Activated CD4-positive, alpha-beta T cell treated with anti-CD3 and anti-CD28 coated beads, Interleukin-2, amount 10 ng/mL, durations not matched to agents 24 days and 14 days (primary cell): ENCODE measurements at regions of chr1 and their contacts with region 1.

Region 1: DNA sequence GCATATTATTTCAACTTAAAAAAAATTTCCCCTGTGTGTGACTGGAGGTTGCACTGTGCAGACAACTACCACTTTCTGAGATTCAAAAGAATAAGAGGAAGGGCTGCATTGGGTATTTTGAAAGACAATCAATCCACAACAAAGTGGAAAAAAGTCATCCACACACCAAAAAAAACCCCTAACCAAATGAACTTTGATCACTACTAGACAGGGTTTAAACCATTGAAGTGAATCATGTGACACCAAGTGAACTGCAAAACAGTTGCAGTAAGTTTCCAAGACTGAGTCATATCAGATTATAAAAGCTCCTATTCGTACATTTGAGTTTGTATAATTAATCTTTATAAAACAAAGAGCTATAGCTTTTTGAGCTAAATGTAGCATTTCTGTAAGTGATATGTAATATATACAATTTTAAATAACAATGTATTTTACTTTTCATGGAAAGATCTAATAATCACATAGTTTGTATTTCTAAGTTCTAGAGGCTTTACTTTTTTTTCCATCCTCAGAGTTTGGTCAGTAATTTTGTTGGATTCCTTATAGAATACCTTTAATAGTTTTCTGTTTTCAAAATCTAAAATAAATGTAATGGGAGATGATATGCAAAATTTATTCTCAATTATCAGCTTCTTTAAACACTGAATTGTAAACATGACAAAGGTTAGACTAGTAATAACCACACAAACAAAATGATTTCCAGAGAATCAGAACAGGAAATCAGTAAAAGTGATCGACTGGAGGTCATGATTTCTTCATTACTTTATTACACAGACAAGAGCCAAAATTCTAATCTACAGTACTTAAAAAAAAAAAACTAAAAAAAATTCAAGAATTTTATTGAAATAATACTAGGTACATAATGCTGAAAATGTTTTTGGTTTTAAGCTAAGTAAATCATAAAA is 50.5 kb upstream of the GFI1 start:
- DNase-seq: peak; percentile 87
- H3K4me3 Mint-ChIP-seq: peak overlapping the region; percentile 64
- H3K27ac Mint-ChIP-seq: peak overlapping the region; percentile 91
- H3K4me1 Mint-ChIP-seq: peaks cover 72% of the 10 kb centered on the region
- H3K27me3 Mint-ChIP-seq: no peaks in the 10 kb centered on the region

Region 2: GRCh38 chr1:92298573-92299476 is 238.4 kb before region 1 on chr1 and contains the starts of genes GLMN and RPAP2:
- intact Hi-C with region 1: loop called (anchors 1 kb)
- DNase-seq: peak; percentile 94
- H3K4me3 Mint-ChIP-seq: peak within 1 kb of the TSS; percentile 99
- H3K27ac Mint-ChIP-seq: peak within 1 kb of the TSS; percentile 99
- H3K4me1 Mint-ChIP-seq: peaks cover 40% of the 10 kb centered on the region
- H3K27me3 Mint-ChIP-seq: no peaks in the 10 kb centered on the region
- total RNA-seq, gene GLMN: 24.2 and 28.5 TPM in 2 replicates
- total RNA-seq, gene RPAP2: 39.4 and 46.8 TPM in 2 replicates

Region 3: DNA sequence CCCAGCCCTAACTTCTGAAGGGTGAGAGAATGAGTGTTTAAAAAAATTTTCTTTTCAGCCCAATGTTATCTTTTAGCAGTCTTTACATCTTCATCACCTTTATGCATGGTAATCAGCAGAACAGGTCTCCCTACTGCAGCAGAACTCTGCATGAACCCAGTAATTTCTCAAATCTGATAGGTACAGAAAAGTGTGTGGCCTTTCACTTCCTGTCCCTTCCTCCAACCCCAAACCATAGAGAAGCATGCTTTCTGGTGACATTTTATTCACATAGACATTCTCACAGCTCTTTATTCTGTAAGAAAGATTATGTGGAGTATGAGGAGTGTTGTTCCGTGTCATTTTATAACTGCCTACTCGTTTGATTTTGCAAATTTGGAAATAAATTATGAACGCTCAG is 169.7 kb before region 1 on chr1:
- intact Hi-C with region 1: loop called (anchors 1 kb)
- DNase-seq: peak; percentile 65
- H3K4me3 Mint-ChIP-seq: peak overlapping the region; percentile 31
- H3K27ac Mint-ChIP-seq: no peak overlapping the region
- H3K4me1 Mint-ChIP-seq: peaks cover 42% of the 10 kb centered on the region
- H3K27me3 Mint-ChIP-seq: no peaks in the 10 kb centered on the region

Region 4: GRCh38 chr1:92485381-92486257 is 51.6 kb before region 1 on chr1:
- intact Hi-C with region 1: loop called (anchors 1 kb)
- DNase-seq: peak; percentile 96
- H3K4me3 Mint-ChIP-seq: peak overlapping the region; percentile 95
- H3K27ac Mint-ChIP-seq: peak overlapping the region; percentile 98
- H3K4me1 Mint-ChIP-seq: peaks cover 33% of the 10 kb centered on the region
- H3K27me3 Mint-ChIP-seq: no peaks in the 10 kb centered on the region

Region 5: GRCh38 chr1:92556350-92556749 is 19.1 kb after region 1 on chr1:
- intact Hi-C with region 1: loop called (anchors 1 kb)
- DNase-seq: no peak
- H3K4me3 Mint-ChIP-seq: no peak overlapping the region
- H3K27ac Mint-ChIP-seq: peak overlapping the region; percentile 71
- H3K4me1 Mint-ChIP-seq: peaks cover 37% of the 10 kb centered on the region
- H3K27me3 Mint-ChIP-seq: no peaks in the 10 kb centered on the region

Region 6: GRCh38 chr1:92583821-92584760 is 46.9 kb after region 1 on chr1:
- intact Hi-C with region 1: loop called (anchors 1 kb)
- DNase-seq: no peak
- H3K4me3 Mint-ChIP-seq: peak overlapping the region; percentile 74
- H3K27ac Mint-ChIP-seq: peak overlapping the region; percentile 92
- H3K4me1 Mint-ChIP-seq: peaks cover 50% of the 10 kb centered on the region
- H3K27me3 Mint-ChIP-seq: no peaks in the 10 kb centered on the region